Dorsolateral prefrontal cortex (tissue), 120 donors: ENCODE measurements at regions of chr6 and their contacts with region 1.

Region 1: DNA sequence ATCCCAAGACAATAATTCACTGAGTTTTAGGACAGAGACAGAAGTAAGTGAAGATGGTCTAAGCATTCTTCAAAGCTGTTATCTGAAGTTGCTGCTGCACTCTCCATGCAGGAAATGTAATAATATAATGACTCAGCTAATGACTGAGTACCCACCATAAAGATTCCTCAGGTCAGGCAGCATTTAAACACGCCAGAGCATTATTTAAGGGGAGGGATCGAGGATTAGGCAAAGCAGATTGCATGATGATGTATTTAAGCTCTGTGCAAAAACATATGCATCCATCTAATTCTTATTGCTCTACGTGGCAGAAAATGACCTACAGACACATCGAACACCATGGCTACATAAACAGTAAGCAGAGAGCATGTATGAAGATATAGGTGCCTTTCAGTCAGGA is 216.4 kb downstream of the UNC5CL start:
- DNase-seq: no peak
- H3K4me3 ChIP-seq: no peak overlapping the region
- H3K27ac ChIP-seq: no peak overlapping the region
- H3K27me3 ChIP-seq: peaks cover 0 to 3% (median 0%) of the 10 kb centered on the region in 45 donors
- CTCF ChIP-seq: no peak

Region 2: DNA sequence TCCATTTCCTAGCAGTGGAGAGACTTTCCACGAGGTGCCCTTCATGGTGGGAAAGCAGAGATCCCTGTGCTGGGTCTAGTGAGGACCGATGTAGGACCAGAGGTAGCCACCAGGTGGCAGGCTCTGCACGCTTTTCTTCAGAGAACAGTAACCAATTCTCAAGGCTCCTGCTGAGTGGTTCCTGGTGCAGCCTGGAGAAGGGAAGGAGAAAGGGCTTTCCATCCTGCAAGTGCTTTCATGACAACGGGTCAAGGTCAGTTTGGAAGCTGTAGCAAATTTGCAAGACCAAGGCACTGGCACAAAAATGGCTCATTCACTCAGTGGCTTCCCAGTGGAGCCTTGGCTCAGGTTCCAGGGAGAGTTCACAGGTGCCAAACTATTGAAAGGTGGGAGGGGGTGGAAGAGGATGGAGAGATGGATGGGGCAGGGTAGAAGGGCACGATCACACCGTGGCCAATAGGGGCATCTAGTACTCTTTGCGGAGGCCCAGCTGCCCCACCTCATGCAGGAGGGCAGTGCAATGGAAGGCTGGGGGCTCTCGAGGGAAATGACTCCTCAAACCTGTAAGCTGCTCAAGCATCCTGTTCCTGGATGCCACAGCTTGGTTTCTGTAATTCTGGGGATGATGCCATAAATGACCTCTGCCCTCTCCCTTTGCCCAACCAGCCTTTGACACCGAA is 1474.6 kb before region 1 on chr6:
- intact Hi-C with region 1: loop called in 1 of 2 experiments (anchors 10 kb)
- DNase-seq: peak; percentile 49 to 87 (median 79)
- H3K4me3 ChIP-seq: no peak overlapping the region
- H3K27ac ChIP-seq: peak overlapping the region in 1 of 59 donors; percentile 9
- H3K27me3 ChIP-seq: no peaks in the 10 kb centered on the region
- CTCF ChIP-seq: peak; percentile 54 to 96 (median 89)

Region 3: DNA sequence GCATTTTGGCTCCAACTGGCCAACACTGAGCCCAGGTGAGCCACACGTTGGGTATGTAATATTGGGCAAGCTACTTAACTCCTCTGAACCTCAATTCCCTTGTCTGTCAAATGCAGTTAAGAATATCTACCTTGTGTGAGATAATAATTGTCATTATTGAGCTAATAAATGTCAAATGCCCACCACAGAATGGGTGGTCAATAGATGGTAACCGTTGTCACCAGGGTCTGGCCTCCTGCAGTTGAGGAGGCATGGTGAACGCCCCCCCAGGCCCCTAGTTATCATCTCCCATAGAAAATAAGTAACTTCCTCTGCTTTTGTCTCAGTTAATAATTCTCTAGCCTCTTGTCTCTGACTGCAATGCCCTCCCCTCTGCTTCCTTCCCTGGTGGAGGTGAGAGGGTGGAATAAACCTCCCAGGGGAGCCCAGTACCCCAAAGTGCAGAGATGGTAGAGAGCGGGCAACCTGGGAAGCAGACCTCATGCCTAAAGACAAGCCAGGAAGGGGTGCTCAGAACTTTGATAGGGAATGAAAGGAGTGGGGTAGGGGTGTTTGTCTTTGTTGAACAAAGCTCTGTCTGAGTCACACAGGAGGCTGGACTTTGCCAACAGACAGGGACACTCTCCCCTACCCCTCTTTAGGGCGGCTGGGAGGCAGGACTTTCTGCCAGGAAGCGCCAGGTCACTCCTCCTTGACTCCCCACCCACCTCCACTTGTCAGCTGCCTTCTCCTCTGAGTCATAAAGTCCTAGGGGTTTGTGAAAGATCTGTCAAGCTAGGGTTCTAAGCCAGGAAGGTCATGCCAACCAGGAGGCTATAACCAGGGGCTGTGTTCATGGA is 217.7 kb after region 1 on chr6:
- intact Hi-C with region 1: no loop called
- DNase-seq: no peak
- H3K4me3 ChIP-seq: no peak overlapping the region
- H3K27ac ChIP-seq: no peak overlapping the region
- H3K27me3 ChIP-seq: no peaks in the 10 kb centered on the region
- CTCF ChIP-seq: no peak